Caco-2 (cell line): ENCODE measurements at regions of chr22 and their contacts with region 1.

Region 1: GRCh38 chr22:45096256-45096907 is 67.3 kb upstream of the NUP50 start:
- DNase-seq: peak; percentile 63 to 78
- H3K4me3 ChIP-seq: no peak overlapping the region
- H3K4me3 Mint-ChIP-seq: no peak overlapping the region
- H3K27ac Mint-ChIP-seq: no peak overlapping the region
- H3K4me1 ChIP-seq: peaks cover 7% of the 10 kb centered on the region; the same call in 1 of the 2 replicates
- H3K4me1 Mint-ChIP-seq: peaks cover 9% of the 10 kb centered on the region
- H3K27me3 ChIP-seq: no peaks in the 10 kb centered on the region
- H3K27me3 Mint-ChIP-seq: peaks cover 3% of the 10 kb centered on the region
- CTCF ChIP-seq: peak; percentile 77 to 92

Region 2: GRCh38 chr22:43242627-43243026 is 1853.8 kb before region 1 on chr22:
- CTCF ChIA-PET with region 1: interaction called, 10 read pairs
- POLR2A ChIA-PET with region 1: no interaction called
- intact Hi-C with region 1: no loop called
- DNase-seq: no peak
- H3K4me3 ChIP-seq: no peak overlapping the region
- H3K4me3 Mint-ChIP-seq: no peak overlapping the region
- H3K27ac Mint-ChIP-seq: no peak overlapping the region
- H3K4me1 ChIP-seq: no peaks in the 10 kb centered on the region
- H3K4me1 Mint-ChIP-seq: no peaks in the 10 kb centered on the region
- H3K27me3 ChIP-seq: no peaks in the 10 kb centered on the region
- H3K27me3 Mint-ChIP-seq: no peaks in the 10 kb centered on the region
- CTCF ChIP-seq: no peak

Region 3: DNA sequence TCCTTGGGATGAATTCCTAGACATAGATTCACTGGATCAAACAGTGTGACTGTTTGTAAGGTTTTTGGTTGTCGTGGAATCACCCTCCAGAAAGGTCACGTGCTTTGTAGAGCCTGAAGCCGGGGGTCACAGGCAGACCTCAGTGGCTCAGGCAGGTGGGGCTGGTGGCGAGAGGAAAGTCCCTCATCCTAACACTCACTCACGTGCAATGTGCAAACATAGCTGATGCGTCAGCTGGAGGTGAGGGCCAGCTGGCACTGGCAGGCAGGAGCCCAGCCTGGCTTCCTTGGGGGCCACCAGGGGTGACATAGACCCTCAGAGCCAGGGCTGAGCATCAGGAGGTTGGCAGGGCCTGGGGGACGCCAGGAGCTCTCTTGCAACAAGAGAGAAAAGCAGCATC is 254.0 kb before region 1 on chr22:
- CTCF ChIA-PET with region 1: no interaction called
- POLR2A ChIA-PET with region 1: no interaction called
- intact Hi-C with region 1: no loop called
- DNase-seq: no peak
- H3K4me3 ChIP-seq: no peak overlapping the region
- H3K4me3 Mint-ChIP-seq: no peak overlapping the region
- H3K27ac Mint-ChIP-seq: no peak overlapping the region
- H3K4me1 ChIP-seq: no peaks in the 10 kb centered on the region
- H3K4me1 Mint-ChIP-seq: no peaks in the 10 kb centered on the region
- H3K27me3 ChIP-seq: no peaks in the 10 kb centered on the region
- H3K27me3 Mint-ChIP-seq: no peaks in the 10 kb centered on the region
- CTCF ChIP-seq: no peak

Region 4: GRCh38 chr22:44975427-44976262 is 120.7 kb before region 1 on chr22:
- CTCF ChIA-PET with region 1: no interaction called
- POLR2A ChIA-PET with region 1: no interaction called
- intact Hi-C with region 1: loop called (anchors 1 kb)
- DNase-seq: peak; percentile 85 to 91
- H3K4me3 ChIP-seq: no peak overlapping the region
- H3K4me3 Mint-ChIP-seq: no peak overlapping the region
- H3K27ac Mint-ChIP-seq: no peak overlapping the region
- H3K4me1 ChIP-seq: no peaks in the 10 kb centered on the region
- H3K4me1 Mint-ChIP-seq: peaks cover 10% of the 10 kb centered on the region
- H3K27me3 ChIP-seq: peaks cover 6% of the 10 kb centered on the region
- H3K27me3 Mint-ChIP-seq: peaks cover 29% of the 10 kb centered on the region
- CTCF ChIP-seq: peak; percentile 77 to 83